Dendritic cell treated with granulocyte-macrophage colony-stimulating factor and Interleukin-4, amounts not matched to agents 40 ng/mL and 50 ng/mL, for 4 days (primary cell): ENCODE measurements at regions of chr16 and their contacts with region 1.

Region 1: GRCh38 chr16:30429678-30430427 is at the start of gene DCTPP1:
- H3K4me3 Mint-ChIP-seq: no peak within 1 kb of the TSS
- H3K27ac Mint-ChIP-seq: no peak within 1 kb of the TSS
- H3K4me1 Mint-ChIP-seq: peaks cover 12% of the 10 kb centered on the region
- H3K27me3 Mint-ChIP-seq: no peaks in the 10 kb centered on the region

Region 2: GRCh38 chr16:30417529-30418349 is 12.1 kb before region 1 on chr16:
- intact Hi-C with region 1: loop called (anchors 1 kb)
- H3K4me3 Mint-ChIP-seq: peak overlapping the region; percentile 74
- H3K27ac Mint-ChIP-seq: peak overlapping the region; percentile 67
- H3K4me1 Mint-ChIP-seq: peaks cover 11% of the 10 kb centered on the region
- H3K27me3 Mint-ChIP-seq: no peaks in the 10 kb centered on the region